HEK293 (cell line): ENCODE measurements at regions of chr19 and their contacts with region 1.

Region 1: DNA sequence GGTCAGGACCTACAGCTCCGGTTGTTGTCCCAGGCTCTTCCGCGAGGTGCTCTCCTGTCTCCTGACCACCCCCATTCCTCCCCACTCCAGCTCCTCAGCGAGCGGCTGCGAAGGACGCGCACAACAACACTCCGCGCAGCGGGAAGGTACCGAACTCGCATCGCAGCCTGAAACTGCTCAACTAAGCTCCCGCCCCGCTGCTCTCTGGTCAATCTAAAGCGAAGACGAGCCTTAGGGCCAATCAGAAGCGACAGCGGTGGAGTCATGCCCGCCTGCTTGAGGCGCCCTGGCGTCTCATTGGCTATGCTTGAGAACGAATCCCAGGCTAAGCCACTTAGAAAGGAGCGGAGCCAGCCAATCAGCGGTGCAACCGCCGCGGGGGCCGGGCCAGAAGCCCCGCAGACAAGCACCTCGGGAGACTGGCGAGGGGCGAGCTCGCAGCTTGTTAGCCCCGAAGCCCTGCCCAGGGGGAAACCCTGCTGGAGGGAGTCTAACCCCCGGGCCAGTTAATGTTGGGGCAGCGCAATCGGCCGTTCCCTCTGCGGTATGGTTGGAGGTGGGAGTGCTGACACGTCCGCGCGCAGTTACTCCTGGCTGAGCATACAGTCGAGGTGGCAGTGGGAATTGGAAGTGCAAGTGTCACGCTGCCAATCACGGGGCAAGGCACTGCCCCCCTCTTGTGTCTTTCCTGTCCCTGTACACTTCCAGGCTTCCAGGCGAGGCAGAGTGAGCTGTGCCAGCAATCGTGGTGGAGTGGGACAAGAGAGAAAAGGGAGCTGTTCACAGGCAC is 1.9 kb upstream of the ZBTB32 start:
- H3K4me3 ChIP-seq: peak overlapping the region; percentile 50
- H3K27ac ChIP-seq: peak overlapping the region; percentile 56
- H3K4me1 ChIP-seq: peaks cover 6% of the 10 kb centered on the region
- CTCF ChIP-seq: peak; percentile 51; the same call in 1 of the 2 replicates

Region 2: DNA sequence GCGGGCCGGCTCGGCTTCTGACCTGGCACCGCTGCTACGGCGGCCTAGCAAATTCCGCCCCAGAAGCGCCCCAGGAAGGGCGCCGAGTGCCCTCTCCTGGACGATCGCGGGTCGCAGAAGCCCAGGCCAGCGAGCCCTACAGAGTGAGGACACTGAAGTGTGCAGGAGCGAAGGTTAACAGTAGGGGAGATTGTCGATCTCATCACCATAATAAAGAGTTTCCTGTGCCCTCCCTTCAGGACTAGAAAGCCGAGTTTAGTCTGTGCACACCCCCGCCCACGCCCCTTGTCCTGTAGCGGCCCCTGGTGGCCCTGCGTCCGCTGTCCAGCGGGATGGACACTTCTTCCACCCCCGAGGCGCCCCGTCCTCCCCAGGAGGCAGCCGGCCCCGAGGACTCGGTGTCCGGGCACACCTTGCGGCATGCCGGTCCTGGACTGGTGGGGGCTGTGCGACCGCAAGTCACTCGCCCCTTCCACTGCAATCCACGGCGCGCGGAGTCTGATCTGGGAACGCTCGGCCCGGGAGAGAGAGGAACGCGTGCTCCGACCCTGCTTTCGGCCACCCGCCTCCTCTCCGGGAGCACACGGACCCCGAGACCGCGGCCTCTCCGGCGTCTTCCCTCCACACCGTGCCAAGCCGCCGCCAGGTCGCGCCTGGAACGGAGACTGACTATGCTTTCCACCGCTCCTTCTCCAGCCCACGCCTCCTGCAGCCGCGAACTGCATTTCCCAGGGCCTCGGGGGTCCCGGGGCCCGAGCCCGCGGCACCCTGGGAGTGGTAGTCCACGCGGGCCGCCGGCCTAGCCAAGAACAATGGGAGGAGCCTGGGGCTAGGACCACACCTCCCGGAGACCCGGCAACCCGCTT is 14.6 kb after region 1 on chr19:
- CTCF ChIA-PET with region 1: interaction called, 119 read pairs
- POLR2A ChIA-PET with region 1: interaction called, 38 read pairs
- H3K4me3 ChIP-seq: peak overlapping the region; percentile 44
- H3K27ac ChIP-seq: peak overlapping the region; percentile 93
- H3K4me1 ChIP-seq: peaks cover 23% of the 10 kb centered on the region
- CTCF ChIP-seq: peak; percentile 100

Region 3: DNA sequence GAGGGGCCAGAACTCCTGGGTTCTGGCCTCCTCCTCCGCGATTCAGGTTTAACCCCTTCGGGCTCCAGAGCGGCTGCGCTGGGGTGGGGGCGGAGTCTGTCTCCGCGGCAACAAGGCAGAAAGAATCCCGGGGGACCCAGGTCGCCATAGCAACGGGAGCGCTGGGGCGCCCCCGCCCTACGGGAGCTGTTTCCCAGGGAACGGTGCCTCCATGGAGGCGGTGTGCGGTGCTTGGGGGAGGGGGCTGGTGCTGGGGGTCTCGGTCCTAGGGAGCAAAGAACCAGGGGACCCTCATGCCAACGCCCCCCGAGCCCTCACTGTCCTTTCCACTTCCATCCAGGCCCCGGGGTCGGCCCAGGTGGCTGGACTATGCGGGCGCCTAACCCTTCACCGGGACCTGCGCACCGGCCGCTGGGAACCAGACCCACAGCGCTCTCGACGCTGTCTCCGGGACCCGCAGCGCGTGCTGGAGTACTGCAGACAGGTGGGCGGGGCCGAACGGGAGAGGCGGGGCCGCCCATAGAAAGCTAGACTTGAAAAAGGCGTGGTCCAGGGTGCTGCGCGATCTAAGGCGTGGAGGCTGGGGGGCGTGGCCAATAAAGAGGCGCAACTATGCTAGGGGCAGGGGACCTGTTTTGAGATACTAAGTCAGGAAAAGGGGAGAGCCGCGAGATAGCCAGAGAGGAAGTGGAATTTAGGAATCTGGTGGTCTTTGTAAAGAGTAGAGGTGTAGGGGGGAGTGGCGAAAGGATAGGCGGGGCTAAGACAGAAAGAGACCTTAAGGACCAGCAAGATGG is 167.1 kb after region 1 on chr19:
- CTCF ChIA-PET with region 1: interaction called, 3 read pairs
- POLR2A ChIA-PET with region 1: interaction called, 11 read pairs
- H3K4me3 ChIP-seq: peak overlapping the region; percentile 16; the same call in 1 of the 2 replicates
- H3K27ac ChIP-seq: peak overlapping the region; percentile 34; the same call in 1 of the 2 replicates
- H3K4me1 ChIP-seq: peaks cover 16% of the 10 kb centered on the region
- CTCF ChIP-seq: 0 out of 2 replicates have a peak, but pooled peaks have one; percentile 52

Region 4: DNA sequence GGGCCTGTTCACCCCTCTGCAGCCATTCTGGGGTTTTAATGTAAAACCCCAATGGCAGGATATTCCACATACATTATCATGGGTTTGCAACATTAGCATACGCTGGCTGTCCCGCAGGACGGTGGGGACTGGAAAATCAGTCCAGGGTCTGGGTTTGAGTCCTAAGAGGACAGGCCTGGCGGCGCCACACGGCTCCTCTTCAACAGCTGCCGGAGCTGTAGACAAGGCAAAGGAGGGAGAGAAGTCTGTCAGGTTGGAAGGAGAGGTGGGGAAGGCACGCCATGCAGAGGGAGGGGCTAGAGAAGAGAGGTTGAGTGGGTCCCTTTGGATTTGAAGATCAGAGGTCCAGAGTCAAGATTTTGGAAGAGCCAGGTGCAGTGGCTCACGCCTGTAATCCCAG is 186.0 kb after region 1 on chr19:
- CTCF ChIA-PET with region 1: no interaction called
- POLR2A ChIA-PET with region 1: interaction called, 11 read pairs
- H3K4me3 ChIP-seq: no peak overlapping the region
- H3K27ac ChIP-seq: no peak overlapping the region
- H3K4me1 ChIP-seq: no peaks in the 10 kb centered on the region
- CTCF ChIP-seq: no peak